ENCODE measurements at regions of chr10 and their contacts with region 1.

Region 1: GRCh38 chr10:80924063-80924952 is 386.6 kb downstream of the SH2D4B start:
- DNase-seq: no peak
- CTCF ChIP-seq: peak; percentile 49

Region 2: GRCh38 chr10:80599424-80599847 is 324.9 kb before region 1 on chr10:
- CTCF ChIA-PET with region 1: interaction called, 11 read pairs
- POLR2A ChIA-PET with region 1: no interaction called
- DNase-seq: peak; percentile 76
- CTCF ChIP-seq: peak; percentile 85

Region 3: DNA sequence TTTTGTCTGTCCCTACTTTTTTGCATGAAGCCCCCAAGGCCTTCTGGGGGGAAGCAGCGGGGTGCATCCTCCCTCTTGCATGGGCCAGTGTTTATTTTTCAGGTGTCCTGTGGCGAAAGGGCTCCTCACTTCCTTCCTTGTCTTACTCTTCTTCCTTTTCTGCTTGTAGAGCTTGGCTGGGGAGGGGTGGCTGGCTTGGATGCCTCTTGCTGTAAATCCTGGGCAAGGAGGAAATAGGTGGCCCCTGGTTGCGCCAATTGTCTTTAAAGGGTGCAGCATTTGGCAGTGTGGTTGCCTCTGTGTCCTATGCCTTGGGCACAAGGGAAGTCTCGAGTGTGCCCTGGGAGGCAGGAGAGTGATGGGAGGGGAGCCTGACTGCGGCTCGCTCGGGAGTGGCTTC is 291.6 kb before region 1 on chr10:
- CTCF ChIA-PET with region 1: no interaction called
- POLR2A ChIA-PET with region 1: no interaction called
- DNase-seq: no peak
- CTCF ChIP-seq: no peak

Region 4: DNA sequence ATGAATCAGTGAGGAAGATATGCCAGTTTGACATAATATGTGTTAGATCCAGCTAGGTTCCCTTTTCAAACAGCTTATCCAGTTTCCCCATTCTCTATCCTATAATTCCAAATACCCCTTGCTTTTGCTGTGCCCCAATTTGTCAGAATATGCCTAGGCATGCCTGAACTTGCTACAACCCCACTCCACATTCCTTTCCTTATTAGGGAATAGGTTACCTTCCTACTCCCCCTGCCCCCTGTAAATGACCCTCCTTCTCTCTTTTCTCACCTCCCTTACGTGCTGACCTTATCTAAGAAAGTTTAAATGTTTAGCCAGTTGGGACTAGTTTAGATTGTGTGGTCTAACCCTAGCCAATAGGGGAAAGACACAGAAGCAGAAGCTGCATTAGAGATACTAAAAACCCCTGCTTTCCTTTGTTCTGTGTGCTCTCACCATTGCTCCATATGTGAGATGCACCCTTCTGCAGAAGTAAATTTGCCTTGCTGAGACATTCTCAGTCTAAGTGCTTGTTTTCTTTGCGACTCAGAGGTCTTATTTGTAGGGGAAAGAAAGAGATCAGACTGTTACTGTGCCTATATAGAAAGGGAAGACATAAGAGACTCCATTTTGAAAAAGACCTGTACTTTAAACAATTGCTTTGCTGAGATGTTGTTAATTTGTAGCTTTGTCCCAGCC is 118.8 kb before region 1 on chr10:
- CTCF ChIA-PET with region 1: no interaction called
- POLR2A ChIA-PET with region 1: no interaction called
- DNase-seq: no peak
- CTCF ChIP-seq: no peak

Region 5: GRCh38 chr10:80900661-80901060 is 23.6 kb before region 1 on chr10:
- CTCF ChIA-PET with region 1: interaction called, 24 read pairs
- POLR2A ChIA-PET with region 1: no interaction called
- DNase-seq: no peak
- CTCF ChIP-seq: no peak

Region 6: DNA sequence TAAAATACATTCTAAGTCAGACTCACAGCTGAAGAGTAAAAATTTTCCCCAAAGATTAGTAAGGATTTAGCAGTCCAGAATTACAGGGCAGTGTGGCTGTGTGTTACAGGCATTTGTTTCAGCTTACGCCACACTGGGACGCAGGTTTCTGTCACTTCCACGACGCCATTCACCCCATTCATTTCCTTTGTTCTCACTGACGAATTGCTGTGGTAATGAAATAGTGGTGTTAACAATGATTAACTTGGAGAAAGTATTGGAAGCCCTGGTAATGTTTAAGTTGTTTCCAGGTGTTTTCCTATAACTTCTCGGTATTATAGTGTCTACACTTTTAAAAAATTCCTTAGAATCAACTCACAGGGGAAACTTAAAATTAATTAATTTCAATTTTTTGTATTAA is 15.7 kb before region 1 on chr10:
- CTCF ChIA-PET with region 1: interaction called, 24 read pairs
- POLR2A ChIA-PET with region 1: no interaction called
- DNase-seq: no peak
- CTCF ChIP-seq: no peak

Region 7: DNA sequence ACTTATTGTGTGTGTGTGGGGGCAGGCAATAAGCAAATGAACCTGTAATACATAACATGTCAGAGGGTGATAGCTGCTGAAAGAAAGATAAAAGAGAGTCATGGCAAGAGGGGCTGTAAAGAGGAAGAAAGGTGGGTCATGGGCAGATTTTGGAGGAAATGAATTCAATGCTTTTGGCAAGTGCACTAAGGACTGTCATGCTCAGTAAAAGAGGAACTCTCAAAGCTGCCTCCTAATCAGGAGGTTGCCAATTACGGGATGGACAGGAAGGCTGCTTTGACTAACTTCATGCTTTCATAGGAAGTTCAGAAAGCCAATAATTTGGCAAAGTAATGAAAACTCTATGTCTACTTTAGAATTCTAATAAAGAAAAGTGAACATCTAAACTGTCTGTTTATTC is 14.6 kb after region 1 on chr10:
- CTCF ChIA-PET with region 1: interaction called, 27 read pairs
- POLR2A ChIA-PET with region 1: no interaction called
- DNase-seq: no peak
- CTCF ChIP-seq: no peak

Region 8: DNA sequence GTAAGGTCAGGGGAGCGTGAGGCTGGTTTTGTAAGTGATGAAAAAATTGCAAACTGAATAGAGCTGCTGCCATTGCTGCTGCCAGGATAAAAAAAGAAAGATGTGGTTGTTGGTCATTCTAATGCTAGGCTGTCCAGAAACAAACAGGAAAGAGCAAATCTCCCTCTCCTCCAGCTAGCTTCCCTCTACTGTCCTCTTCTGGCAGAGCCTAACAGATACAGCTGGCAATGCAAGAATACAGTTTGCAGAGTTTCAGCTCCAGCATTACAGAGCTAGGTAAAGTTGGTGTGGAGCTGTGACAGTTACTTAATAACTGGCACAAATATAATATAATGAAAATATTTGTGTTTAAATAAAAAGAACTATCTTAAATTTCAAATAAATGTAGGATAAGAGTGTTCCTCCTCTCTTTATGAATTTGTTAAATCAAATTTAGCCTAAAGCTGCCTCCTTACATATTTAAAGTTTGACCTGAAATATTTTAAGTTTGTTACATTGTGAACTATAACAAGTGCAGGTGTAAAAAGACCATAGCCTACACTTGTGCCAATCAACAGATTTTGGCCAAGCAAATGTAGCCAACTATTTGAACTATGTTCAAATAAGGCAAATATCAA is 21.1 kb after region 1 on chr10:
- CTCF ChIA-PET with region 1: interaction called, 14 read pairs
- POLR2A ChIA-PET with region 1: no interaction called
- DNase-seq: peak; percentile 10
- CTCF ChIP-seq: peak; percentile 58

Region 9: DNA sequence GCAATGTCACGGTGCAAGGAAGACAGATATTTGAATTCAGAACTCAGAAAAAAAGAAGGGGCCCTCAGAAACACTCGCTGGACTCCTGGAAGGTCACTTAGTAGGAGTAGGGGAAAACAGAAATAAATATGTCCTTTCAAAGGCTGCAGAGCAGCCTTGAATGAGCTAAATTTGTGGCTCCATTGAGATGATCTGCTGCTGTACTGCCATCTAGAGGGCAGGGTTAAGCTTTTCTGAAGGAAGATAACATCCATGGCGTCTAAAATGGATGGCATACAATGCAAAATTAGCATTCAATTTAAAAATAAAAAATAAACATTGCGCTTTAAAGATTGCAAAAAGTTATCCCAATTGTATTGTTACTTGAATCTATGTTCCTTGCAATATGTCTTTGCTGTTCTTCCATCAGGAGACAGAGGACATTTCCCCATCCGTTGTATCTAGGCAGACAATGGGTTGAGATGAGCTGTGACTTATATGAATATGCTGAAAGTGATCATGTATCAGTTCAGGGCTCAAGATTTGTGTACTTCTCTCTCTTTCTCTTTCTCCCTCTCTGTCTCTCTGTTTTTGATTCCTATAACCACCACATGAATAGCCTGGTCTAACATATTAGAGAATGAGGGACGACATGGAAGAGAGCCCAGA is 255.6 kb after region 1 on chr10:
- CTCF ChIA-PET with region 1: interaction called, 12 read pairs
- POLR2A ChIA-PET with region 1: no interaction called
- DNase-seq: peak; percentile 35
- CTCF ChIP-seq: peak; percentile 64